AG04449 (cell line): ENCODE measurements at regions of chr20 and their contacts with region 1.

Region 1: DNA sequence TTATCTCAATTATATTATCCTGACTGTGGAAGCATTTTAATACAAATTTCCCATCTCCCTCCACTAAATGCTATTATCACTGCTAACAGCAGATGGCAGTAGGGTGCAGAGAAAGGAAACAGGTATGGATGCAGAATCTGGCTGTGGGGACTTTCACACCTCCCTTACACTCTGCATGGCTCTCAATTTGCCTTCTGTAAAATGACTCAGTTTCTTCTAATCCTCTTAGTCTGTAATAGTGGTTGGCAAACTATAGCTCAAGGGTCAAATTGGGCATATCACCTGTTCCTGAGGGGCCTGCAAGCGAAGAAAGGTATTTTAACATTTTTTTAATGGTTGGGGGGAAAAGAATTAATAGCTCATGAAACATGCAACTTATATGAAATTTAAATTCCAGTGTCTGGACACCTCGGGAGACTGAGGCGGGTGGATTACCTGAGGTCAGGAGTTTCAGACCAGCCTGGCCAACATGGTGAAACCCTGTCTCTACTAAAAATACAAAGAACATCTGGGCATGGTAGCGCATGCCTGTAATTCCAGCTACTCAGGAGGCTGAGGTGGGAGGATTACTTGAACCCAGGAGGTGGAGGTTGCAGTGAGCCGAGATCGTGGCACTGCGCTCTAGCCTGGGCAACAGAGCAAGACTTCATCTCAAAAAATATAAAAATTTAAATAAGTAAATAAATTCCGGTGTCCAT is 83.5 kb downstream of the ZMYND8 start:
- DNase-seq: no peak
- H3K4me3 ChIP-seq: no peak overlapping the region
- CTCF ChIP-seq: peak; percentile 78

Region 2: GRCh38 chr20:47231382-47232039 is 41.5 kb before region 1 on chr20:
- CTCF ChIA-PET with region 1: interaction called, 22 read pairs
- POLR2A ChIA-PET with region 1: no interaction called
- DNase-seq: peak; percentile 83
- H3K4me3 ChIP-seq: no peak overlapping the region
- CTCF ChIP-seq: peak; percentile 28

Region 3: GRCh38 chr20:47258745-47259695 is 14.0 kb before region 1 on chr20:
- CTCF ChIA-PET with region 1: interaction called, 54 read pairs
- POLR2A ChIA-PET with region 1: interaction called, 4 read pairs
- DNase-seq: no peak
- H3K4me3 ChIP-seq: no peak overlapping the region
- CTCF ChIP-seq: no peak

Region 4: GRCh38 chr20:47304287-47304686 is 31.2 kb after region 1 on chr20:
- CTCF ChIA-PET with region 1: interaction called, 25 read pairs
- POLR2A ChIA-PET with region 1: no interaction called
- DNase-seq: no peak
- H3K4me3 ChIP-seq: no peak overlapping the region
- CTCF ChIP-seq: no peak

Region 5: GRCh38 chr20:47348539-47349142 is 75.6 kb after region 1 on chr20:
- CTCF ChIA-PET with region 1: interaction called, 112 read pairs
- POLR2A ChIA-PET with region 1: interaction called, 3 read pairs
- DNase-seq: no peak
- H3K4me3 ChIP-seq: no peak overlapping the region
- CTCF ChIP-seq: no peak

Region 6: GRCh38 chr20:47392015-47392720 is 119.1 kb after region 1 on chr20:
- CTCF ChIA-PET with region 1: interaction called, 633 read pairs
- POLR2A ChIA-PET with region 1: no interaction called
- DNase-seq: peak; percentile 71
- H3K4me3 ChIP-seq: no peak overlapping the region
- CTCF ChIP-seq: no peak

Region 7: DNA sequence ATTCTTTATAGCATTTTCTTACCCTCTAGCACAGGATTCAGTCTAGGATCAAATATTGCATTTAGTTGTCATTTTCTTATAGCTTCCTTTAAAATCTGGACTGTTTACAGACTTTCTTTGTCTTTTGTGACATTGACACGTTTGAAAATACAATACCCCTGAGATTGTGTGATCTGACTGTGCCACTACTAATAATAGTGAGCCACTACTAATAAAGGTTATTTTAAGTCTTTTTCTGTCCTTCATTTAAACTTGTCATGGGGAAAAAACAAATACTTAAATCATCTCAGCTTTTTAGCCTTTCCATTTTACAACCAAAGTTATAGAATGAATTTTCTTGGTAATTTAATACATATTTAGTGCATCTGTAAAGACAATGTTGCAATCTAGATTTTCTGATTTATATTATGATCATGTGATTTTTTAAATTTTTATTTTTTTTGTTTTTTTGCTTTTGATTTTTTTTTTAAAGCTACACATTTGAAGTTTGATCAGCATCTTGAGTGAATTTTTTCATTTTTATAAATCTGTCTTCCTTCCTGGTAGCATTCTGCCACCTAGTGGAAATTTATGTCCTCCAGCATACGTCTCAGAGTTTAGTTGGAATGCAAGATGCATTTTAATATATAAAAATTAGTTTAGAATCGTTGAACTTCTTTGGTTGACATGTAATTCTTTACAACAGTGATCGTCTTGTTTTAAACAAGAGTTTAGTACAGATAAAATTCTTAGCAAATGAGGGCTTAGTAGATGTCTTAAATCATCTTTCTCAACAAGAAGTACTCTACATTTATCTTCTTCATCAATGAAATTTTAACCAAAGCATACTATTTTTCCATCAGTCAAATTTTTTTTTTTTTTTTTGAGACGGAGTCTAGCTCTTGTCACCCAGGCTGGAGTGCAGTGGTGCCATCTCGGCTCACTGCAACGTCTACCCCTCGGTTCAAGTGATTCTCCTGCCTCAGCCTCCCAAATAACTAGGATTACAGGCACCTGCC is 348.1 kb after region 1 on chr20:
- CTCF ChIA-PET with region 1: interaction called, 33 read pairs
- POLR2A ChIA-PET with region 1: no interaction called
- DNase-seq: no peak
- H3K4me3 ChIP-seq: no peak overlapping the region
- CTCF ChIP-seq: peak; percentile 46